Ovary (tissue), 10 donors: ENCODE measurements at regions of chr4 and their contacts with region 1.

Region 1: GRCh38 chr4:183517781-183518180 is 12.9 kb downstream of the ING2 start:
- DNase-seq: no peak
- H3K4me3 ChIP-seq: no peak overlapping the region
- H3K27ac ChIP-seq: no peak overlapping the region
- H3K4me1 ChIP-seq: peaks cover 3% of the 10 kb centered on the region
- H3K27me3 ChIP-seq: no peaks in the 10 kb centered on the region
- CTCF ChIP-seq: no peak
- EP300 ChIP-seq: no peak
- POLR2A ChIP-seq: no peak

Region 2: DNA sequence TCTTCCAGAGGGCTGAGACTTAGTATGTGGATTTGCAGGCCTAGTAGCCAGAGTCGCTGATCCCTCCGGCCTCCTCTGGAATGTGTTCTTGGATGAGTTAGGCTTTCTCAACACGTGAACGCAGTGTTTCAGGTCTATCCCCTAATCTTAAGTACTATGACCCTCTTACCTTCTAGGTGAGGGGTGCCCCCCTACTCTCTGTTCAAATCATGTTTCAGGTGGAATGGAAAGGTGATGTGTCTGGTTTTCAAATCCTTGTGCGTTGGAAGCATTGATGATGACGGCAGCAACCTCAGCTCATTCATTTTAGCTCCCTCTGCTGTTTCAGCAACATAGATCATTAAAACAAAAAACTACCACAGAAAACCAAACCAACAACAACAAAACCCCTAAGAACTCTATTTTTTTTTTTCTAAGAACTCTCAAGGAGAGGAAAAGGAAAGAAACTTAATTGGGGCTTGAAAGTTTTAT is 84.8 kb after region 1 on chr4:
- intact Hi-C with region 1: no loop called
- DNase-seq: peak in 1 of 5 donors; percentile 48
- H3K4me3 ChIP-seq: no peak overlapping the region
- H3K27ac ChIP-seq: peak overlapping the region in 1 of 2 donors; percentile 30
- H3K4me1 ChIP-seq: no peaks in the 10 kb centered on the region
- H3K27me3 ChIP-seq: no peaks in the 10 kb centered on the region
- CTCF ChIP-seq: peak; percentile 41 to 71 (median 46)
- EP300 ChIP-seq: no peak
- POLR2A ChIP-seq: no peak

Region 3: GRCh38 chr4:183659029-183659871 is 141.5 kb after region 1 on chr4 and contains the starts of genes RWDD4 and TRAPPC11:
- intact Hi-C with region 1: loop called in 1 of 4 experiments (anchors 5 kb)
- DNase-seq: peak; percentile 98 to 99 (median 98)
- H3K4me3 ChIP-seq: peak within 1 kb of the TSS; percentile 92
- H3K27ac ChIP-seq: peak within 1 kb of the TSS; percentile 73 to 90
- H3K4me1 ChIP-seq: peaks cover 3% of the 10 kb centered on the region
- H3K27me3 ChIP-seq: no peaks in the 10 kb centered on the region
- CTCF ChIP-seq: peak in 2 of 3 donors; percentile 80 to 82
- EP300 ChIP-seq: no peak
- POLR2A ChIP-seq: peak; percentile 94
- total RNA-seq, gene RWDD4: 29.0 to 63.5 (median 37.8) TPM
- total RNA-seq, gene TRAPPC11: 29.7 to 52.7 (median 43.9) TPM